Common myeloid progenitor, CD34-positive (primary cell): ENCODE measurements at regions of chr22 and their contacts with region 1.

Region 1: GRCh38 chr22:30423982-30424963 is 1.3 kb upstream of the MTFP1 start:
- DNase-seq: peak; percentile 99 to 100 (median 100)
- H3K4me3 ChIP-seq: peak overlapping the region; percentile 54 to 85 (median 75)
- H3K27ac ChIP-seq: peak overlapping the region; percentile 81 to 88
- H3K4me1 ChIP-seq: peaks cover 9 to 44% (median 41%) of the 10 kb centered on the region in 4 experiments
- H3K27me3 ChIP-seq: no peaks in the 10 kb centered on the region

Region 2: GRCh38 chr22:30205281-30206115 is 218.8 kb before region 1 on chr22:
- CTCF ChIA-PET with region 1: no interaction called
- POLR2A ChIA-PET with region 1: no interaction called
- DNase-seq: no peak
- H3K4me3 ChIP-seq: no peak overlapping the region
- H3K27ac ChIP-seq: no peak overlapping the region
- H3K4me1 ChIP-seq: peaks cover 0 to 15% (median 11%) of the 10 kb centered on the region in 4 experiments
- H3K27me3 ChIP-seq: no peaks in the 10 kb centered on the region

Region 3: GRCh38 chr22:30396871-30397655 is 27.2 kb before region 1 on chr22 and contains the start of gene SEC14L2:
- CTCF ChIA-PET with region 1: interaction called, 13 read pairs
- POLR2A ChIA-PET with region 1: interaction called, 3 read pairs
- DNase-seq: peak in 2 of 3 donors; percentile 18 to 34
- H3K4me3 ChIP-seq: peak within 1 kb of the TSS in 6 of 7 experiments; percentile 26 to 61 (median 50)
- H3K27ac ChIP-seq: no peak within 1 kb of the TSS
- H3K4me1 ChIP-seq: peaks cover 0 to 47% (median 18%) of the 10 kb centered on the region in 4 experiments
- H3K27me3 ChIP-seq: peaks cover 0 to 49% (median 26%) of the 10 kb centered on the region in 5 experiments

Region 4: DNA sequence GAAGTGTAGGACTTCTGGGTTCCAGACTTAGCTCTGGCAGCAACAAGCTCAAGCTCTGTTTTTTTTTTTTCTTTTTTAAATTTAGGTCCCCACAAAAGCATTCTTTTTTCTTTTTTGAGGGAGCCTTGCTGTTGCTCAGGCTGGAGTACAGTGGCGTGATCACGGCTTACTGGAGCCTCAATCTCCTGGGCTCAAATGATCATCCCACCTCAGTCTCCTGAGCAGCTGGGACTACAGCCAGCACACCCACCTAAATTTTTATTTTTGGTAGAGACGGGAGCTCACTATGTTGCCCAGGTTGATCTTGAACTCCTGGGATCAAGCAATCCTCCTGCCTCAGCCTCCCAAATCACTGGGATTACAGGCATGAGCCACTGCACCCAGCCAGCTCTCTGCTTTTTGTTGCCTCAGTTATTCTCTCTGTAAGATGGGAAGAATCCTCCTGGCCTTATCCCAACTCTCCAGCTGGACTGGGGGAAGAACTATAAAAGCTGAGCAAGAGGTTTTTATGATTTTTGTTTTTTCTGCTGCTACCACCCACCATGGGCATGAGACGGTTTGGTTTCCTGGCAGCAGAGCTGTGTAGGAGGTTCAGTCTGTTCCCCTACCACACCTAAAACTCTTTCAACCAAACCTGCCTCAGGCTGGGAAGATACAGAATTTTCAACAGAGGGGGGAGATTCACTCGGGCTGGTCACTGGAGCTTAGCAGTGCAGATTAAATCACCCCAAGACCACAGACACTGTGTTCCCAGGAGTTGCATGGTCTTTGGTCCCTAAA is 10.3 kb before region 1 on chr22:
- CTCF ChIA-PET with region 1: interaction called, 42 read pairs
- POLR2A ChIA-PET with region 1: interaction called, 3 read pairs
- DNase-seq: no peak
- H3K4me3 ChIP-seq: no peak overlapping the region
- H3K27ac ChIP-seq: no peak overlapping the region
- H3K4me1 ChIP-seq: peaks cover 0 to 2% (median under 1%) of the 10 kb centered on the region in 4 experiments
- H3K27me3 ChIP-seq: no peaks in the 10 kb centered on the region

Region 5: DNA sequence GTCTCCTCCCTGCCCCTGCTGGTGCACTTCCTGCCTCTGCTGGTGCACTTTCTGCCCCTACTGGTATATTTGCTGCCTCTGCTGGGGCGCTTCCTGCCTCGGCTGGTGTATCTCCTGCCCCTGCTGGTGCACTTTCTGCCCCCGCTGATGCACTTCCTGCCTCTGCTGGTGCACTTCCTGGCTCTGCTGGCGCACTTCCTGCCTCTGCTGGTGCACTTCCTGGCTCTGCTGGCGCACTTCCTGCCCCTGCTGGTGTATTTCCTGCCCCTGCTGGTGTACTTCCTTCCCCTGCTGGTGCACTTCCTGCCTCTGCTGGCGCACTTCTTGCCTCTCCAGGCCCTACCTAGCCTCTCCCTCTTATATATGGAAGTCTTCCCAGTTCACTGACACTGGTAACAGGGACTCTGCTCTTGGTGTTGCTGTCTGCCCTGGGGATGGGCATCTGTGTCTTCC is 11.4 kb after region 1 on chr22:
- CTCF ChIA-PET with region 1: interaction called, 14 read pairs
- POLR2A ChIA-PET with region 1: no interaction called
- DNase-seq: peak in 2 of 3 donors; percentile 19 to 28
- H3K4me3 ChIP-seq: no peak overlapping the region
- H3K27ac ChIP-seq: no peak overlapping the region
- H3K4me1 ChIP-seq: peaks cover 0 to 11% (median 9%) of the 10 kb centered on the region in 4 experiments
- H3K27me3 ChIP-seq: peaks cover 0 to 7% (median 2%) of the 10 kb centered on the region in 5 experiments